ENCODE measurements at regions of chr13 and their contacts with region 1.

Region 1: GRCh38 chr13:39144941-39145533 is 106.8 kb downstream of the NHLRC3 start:
- DNase-seq: no peak

Region 2: DNA sequence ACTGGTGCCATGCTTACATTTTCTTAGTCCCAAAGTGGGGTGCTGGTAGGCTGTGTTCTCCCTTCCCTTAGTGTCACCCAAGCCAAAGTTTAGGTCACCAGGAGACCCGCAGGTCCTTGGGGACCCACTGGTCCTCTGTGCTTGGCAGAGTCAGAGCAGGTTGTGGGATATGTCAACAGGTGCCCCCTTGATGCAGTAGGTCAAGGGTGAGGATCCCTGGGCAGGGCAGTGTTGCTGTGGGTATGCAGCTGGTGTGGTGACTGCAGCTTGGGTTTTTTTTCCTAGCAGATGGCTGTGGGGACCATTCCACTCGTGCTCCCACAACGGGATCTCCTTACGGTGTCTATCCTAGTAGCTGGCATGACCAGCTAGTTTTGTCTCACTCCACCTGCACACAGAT is 83.0 kb before region 1 on chr13:
- intact Hi-C with region 1: no loop called
- DNase-seq: peak; percentile 42

Region 3: GRCh38 chr13:39159393-39159792 is 14.4 kb after region 1 on chr13:
- intact Hi-C with region 1: no loop called
- DNase-seq: no peak

Region 4: DNA sequence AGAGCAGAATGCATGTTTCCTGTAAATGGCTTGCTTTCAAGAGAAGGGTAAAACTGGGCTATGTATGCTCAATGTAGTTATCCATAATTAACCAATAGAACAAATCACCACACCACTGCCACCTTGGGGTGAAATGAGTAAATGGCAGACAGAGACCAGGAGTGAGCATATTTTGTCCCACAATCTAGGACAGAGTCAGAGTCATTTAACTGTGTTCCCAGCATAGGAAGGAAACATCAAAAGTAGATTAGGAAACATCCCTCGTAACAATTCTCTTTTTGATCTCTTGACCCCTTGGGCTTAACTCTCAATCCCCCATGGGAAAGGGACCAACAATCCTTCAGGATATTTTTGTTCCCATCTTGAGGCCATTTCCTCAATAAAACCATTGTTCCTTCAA is 118.0 kb after region 1 on chr13:
- intact Hi-C with region 1: loop called in 1 of 2 experiments (anchors 10 kb)
- DNase-seq: no peak

Region 5: GRCh38 chr13:39616087-39616694 is 471.2 kb after region 1 on chr13:
- intact Hi-C with region 1: loop called in 1 of 2 experiments (anchors 5 kb)
- DNase-seq: no peak